B cell (primary cell): ENCODE measurements at regions of chr7 and their contacts with region 1.

Region 1: GRCh38 chr7:38215735-38216670 is 38.0 kb downstream of the STARD3NL start:
- DNase-seq: peak; percentile 81
- ATAC-seq: peak; percentile 95
- H3K4me3 ChIP-seq: no peak overlapping the region
- H3K4me3 Mint-ChIP-seq: no peak overlapping the region
- H3K27ac ChIP-seq: no peak overlapping the region
- H3K27ac Mint-ChIP-seq: peak overlapping the region; percentile 2
- H3K4me1 ChIP-seq: peaks cover 4 to 9% of the 10 kb centered on the region in 2 donors
- H3K4me1 Mint-ChIP-seq: peaks cover 7% of the 10 kb centered on the region
- H3K27me3 ChIP-seq: no peaks in the 10 kb centered on the region
- H3K27me3 Mint-ChIP-seq: no peaks in the 10 kb centered on the region
- CTCF ChIP-seq: peak; percentile 97

Region 2: GRCh38 chr7:36923943-36924436 is 1292.0 kb before region 1 on chr7:
- CTCF ChIA-PET with region 1: no interaction called
- POLR2A ChIA-PET with region 1: no interaction called
- intact Hi-C with region 1: no loop called
- DNase-seq: no peak
- ATAC-seq: no peak
- H3K4me3 ChIP-seq: no peak overlapping the region
- H3K4me3 Mint-ChIP-seq: no peak overlapping the region
- H3K27ac ChIP-seq: no peak overlapping the region
- H3K27ac Mint-ChIP-seq: no peak overlapping the region
- H3K4me1 ChIP-seq: no peaks in the 10 kb centered on the region
- H3K4me1 Mint-ChIP-seq: no peaks in the 10 kb centered on the region
- H3K27me3 ChIP-seq: no peaks in the 10 kb centered on the region
- H3K27me3 Mint-ChIP-seq: no peaks in the 10 kb centered on the region
- CTCF ChIP-seq: no peak

Region 3: DNA sequence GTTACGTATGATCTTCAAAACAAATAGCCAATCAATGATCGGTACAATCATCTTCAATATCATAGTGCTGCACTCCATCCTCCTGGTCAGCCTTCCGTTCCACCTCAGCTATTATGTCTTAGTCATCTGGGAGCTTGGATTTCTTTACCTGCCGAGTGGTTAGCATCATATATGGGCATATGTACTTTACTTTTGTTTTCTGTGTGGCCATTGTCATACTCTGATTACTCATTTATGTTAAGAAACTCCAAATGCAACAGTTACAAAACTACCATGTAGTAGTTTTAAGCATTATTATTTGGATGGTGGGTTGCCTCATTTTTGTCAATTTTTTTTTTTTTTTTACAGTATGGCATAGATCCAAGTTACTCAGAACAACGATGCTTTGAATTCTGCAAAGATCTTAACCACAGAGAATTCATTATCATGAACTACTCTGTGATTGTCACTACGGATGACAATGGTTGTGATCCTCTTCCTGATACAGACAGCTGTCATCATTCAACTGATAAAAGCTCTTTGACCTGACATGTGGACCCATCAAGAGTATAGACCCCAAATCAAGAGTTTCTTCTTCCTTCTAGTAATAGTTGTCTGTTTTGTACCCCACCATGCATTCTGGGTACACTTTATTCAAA is 419.7 kb before region 1 on chr7:
- CTCF ChIA-PET with region 1: no interaction called
- POLR2A ChIA-PET with region 1: no interaction called
- intact Hi-C with region 1: no loop called
- DNase-seq: no peak
- ATAC-seq: no peak
- H3K4me3 ChIP-seq: no peak overlapping the region
- H3K4me3 Mint-ChIP-seq: no peak overlapping the region
- H3K27ac ChIP-seq: no peak overlapping the region
- H3K27ac Mint-ChIP-seq: no peak overlapping the region
- H3K4me1 ChIP-seq: no peaks in the 10 kb centered on the region
- H3K4me1 Mint-ChIP-seq: no peaks in the 10 kb centered on the region
- H3K27me3 ChIP-seq: no peaks in the 10 kb centered on the region
- H3K27me3 Mint-ChIP-seq: no peaks in the 10 kb centered on the region
- CTCF ChIP-seq: no peak

Region 4: GRCh38 chr7:38107486-38107893 is 108.5 kb before region 1 on chr7:
- CTCF ChIA-PET with region 1: interaction called, 162 read pairs
- POLR2A ChIA-PET with region 1: no interaction called
- intact Hi-C with region 1: no loop called
- DNase-seq: peak; percentile 69
- ATAC-seq: peak; percentile 57
- H3K4me3 ChIP-seq: no peak overlapping the region
- H3K4me3 Mint-ChIP-seq: no peak overlapping the region
- H3K27ac ChIP-seq: no peak overlapping the region
- H3K27ac Mint-ChIP-seq: no peak overlapping the region
- H3K4me1 ChIP-seq: no peaks in the 10 kb centered on the region
- H3K4me1 Mint-ChIP-seq: no peaks in the 10 kb centered on the region
- H3K27me3 ChIP-seq: peaks cover 0 to 4% (median 2%) of the 10 kb centered on the region in 4 experiments
- H3K27me3 Mint-ChIP-seq: peaks cover 35% of the 10 kb centered on the region
- CTCF ChIP-seq: peak; percentile 94

Region 5: DNA sequence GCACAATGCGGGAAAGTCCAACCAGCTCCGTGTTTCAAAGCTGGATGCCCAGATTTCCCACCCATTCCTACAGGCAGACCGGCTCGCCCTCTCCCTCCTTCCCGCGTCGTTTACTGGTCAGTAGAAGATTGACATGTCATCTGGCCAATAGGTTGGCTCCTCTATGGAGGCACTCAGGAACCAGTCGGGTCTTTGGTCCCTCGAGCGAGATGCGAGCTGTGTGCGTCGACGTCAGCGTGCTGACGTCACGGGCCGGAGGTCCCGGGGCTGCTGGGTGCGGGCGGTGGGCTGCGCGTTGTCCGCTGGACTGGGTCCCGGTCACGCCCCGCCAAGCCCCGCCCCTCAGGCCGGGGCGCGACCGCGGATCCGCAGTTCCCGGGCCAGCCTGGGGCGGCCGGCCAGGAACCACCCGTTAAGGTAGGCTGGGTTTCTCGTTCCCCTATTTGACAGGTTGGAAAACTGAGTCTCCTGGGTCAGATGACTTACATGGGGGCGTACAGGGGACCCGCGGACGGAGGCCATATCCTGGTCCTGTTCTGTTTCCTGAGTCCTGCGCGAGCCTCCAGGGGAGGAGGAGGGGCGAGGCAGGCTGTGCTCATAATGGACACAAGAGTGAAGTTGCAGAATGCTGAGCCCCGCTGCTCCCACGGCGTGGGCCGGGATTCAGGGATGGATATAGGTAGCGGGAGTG is 37.9 kb before region 1 on chr7 and contains the start of gene STARD3NL:
- CTCF ChIA-PET with region 1: interaction called, 13 read pairs
- POLR2A ChIA-PET with region 1: no interaction called
- intact Hi-C with region 1: loop called (anchors 1 kb)
- DNase-seq: peak; percentile 98
- ATAC-seq: peak; percentile 95
- H3K4me3 ChIP-seq: peak within 1 kb of the TSS; percentile 36 to 98 (median 91)
- H3K4me3 Mint-ChIP-seq: peak within 1 kb of the TSS; percentile 97
- H3K27ac ChIP-seq: peak within 1 kb of the TSS; percentile 81 to 93
- H3K27ac Mint-ChIP-seq: peak within 1 kb of the TSS; percentile 95
- H3K4me1 ChIP-seq: peaks cover 16 to 17% of the 10 kb centered on the region in 2 donors
- H3K4me1 Mint-ChIP-seq: peaks cover 33% of the 10 kb centered on the region
- H3K27me3 ChIP-seq: no peaks in the 10 kb centered on the region
- H3K27me3 Mint-ChIP-seq: no peaks in the 10 kb centered on the region
- CTCF ChIP-seq: no peak
- total RNA-seq, gene STARD3NL: 13.4 and 14.2 TPM in 2 replicates

Region 6: DNA sequence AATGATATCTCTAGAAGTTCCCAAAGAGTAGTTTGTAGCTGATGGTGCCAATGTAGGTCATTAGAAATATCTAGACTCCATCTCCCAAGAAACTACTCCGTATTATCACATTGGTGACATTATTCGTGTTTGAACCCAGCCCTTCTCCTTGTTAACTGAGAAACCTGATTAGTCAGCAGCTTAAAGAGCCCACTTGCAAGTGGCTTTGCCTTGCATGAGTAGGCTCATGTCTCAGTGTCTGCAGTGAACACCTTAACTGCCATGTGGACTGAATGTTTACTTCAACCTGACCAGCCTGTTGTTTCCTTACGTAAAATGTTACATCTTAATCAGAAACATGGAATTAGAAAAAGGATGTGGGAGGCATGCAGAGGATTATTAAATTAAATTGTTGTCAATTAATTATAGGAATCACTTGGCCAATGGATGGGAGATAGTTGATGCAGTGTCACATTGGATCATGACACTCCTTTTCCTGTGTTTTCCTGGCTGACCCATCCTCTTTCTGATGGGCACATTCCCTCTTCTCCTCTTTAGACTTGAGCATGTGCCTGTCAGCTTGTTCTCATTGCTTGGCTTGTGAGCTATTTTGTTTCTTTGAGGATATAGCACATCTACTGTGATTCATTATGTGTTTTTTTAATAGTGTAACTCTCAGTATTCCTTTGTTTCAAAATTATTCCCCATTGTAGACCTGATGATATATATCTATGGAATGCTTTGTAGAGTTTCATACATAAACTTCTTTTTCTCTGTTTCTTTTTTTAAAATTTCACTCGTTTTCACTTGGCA is 20.0 kb before region 1 on chr7:
- CTCF ChIA-PET with region 1: interaction called, 16 read pairs
- POLR2A ChIA-PET with region 1: no interaction called
- intact Hi-C with region 1: no loop called
- DNase-seq: no peak
- ATAC-seq: no peak
- H3K4me3 ChIP-seq: no peak overlapping the region
- H3K4me3 Mint-ChIP-seq: no peak overlapping the region
- H3K27ac ChIP-seq: no peak overlapping the region
- H3K27ac Mint-ChIP-seq: no peak overlapping the region
- H3K4me1 ChIP-seq: no peaks in the 10 kb centered on the region
- H3K4me1 Mint-ChIP-seq: peaks cover 27% of the 10 kb centered on the region
- H3K27me3 ChIP-seq: no peaks in the 10 kb centered on the region
- H3K27me3 Mint-ChIP-seq: no peaks in the 10 kb centered on the region
- CTCF ChIP-seq: no peak

Region 7: GRCh38 chr7:38335492-38336147 is 119.6 kb after region 1 on chr7:
- CTCF ChIA-PET with region 1: interaction called, 37 read pairs
- POLR2A ChIA-PET with region 1: no interaction called
- intact Hi-C with region 1: no loop called
- DNase-seq: peak; percentile 86
- ATAC-seq: peak; percentile 98
- H3K4me3 ChIP-seq: no peak overlapping the region
- H3K4me3 Mint-ChIP-seq: peak overlapping the region; percentile 11
- H3K27ac ChIP-seq: no peak overlapping the region
- H3K27ac Mint-ChIP-seq: peak overlapping the region; percentile 13
- H3K4me1 ChIP-seq: peaks cover 5 to 16% of the 10 kb centered on the region in 2 donors
- H3K4me1 Mint-ChIP-seq: peaks cover 15% of the 10 kb centered on the region
- H3K27me3 ChIP-seq: no peaks in the 10 kb centered on the region
- H3K27me3 Mint-ChIP-seq: no peaks in the 10 kb centered on the region
- CTCF ChIP-seq: peak; percentile 96

Region 8: GRCh38 chr7:38369816-38370493 is 154.0 kb after region 1 on chr7:
- CTCF ChIA-PET with region 1: interaction called, 49 read pairs
- POLR2A ChIA-PET with region 1: no interaction called
- intact Hi-C with region 1: loop called (anchors 1 kb)
- DNase-seq: peak; percentile 87
- ATAC-seq: peak; percentile 80
- H3K4me3 ChIP-seq: no peak overlapping the region
- H3K4me3 Mint-ChIP-seq: peak overlapping the region; percentile 2
- H3K27ac ChIP-seq: peak overlapping the region in 1 of 2 donors; percentile 32
- H3K27ac Mint-ChIP-seq: no peak overlapping the region
- H3K4me1 ChIP-seq: peaks cover 10 to 25% of the 10 kb centered on the region in 2 donors
- H3K4me1 Mint-ChIP-seq: peaks cover 18% of the 10 kb centered on the region
- H3K27me3 ChIP-seq: no peaks in the 10 kb centered on the region
- H3K27me3 Mint-ChIP-seq: no peaks in the 10 kb centered on the region
- CTCF ChIP-seq: peak; percentile 74

Region 9: GRCh38 chr7:38375453-38375852 is 159.4 kb after region 1 on chr7:
- CTCF ChIA-PET with region 1: interaction called, 49 read pairs
- POLR2A ChIA-PET with region 1: no interaction called
- intact Hi-C with region 1: loop called (anchors 1 kb)
- DNase-seq: no peak
- ATAC-seq: no peak
- H3K4me3 ChIP-seq: no peak overlapping the region
- H3K4me3 Mint-ChIP-seq: no peak overlapping the region
- H3K27ac ChIP-seq: no peak overlapping the region
- H3K27ac Mint-ChIP-seq: no peak overlapping the region
- H3K4me1 ChIP-seq: no peaks in the 10 kb centered on the region
- H3K4me1 Mint-ChIP-seq: no peaks in the 10 kb centered on the region
- H3K27me3 ChIP-seq: no peaks in the 10 kb centered on the region
- H3K27me3 Mint-ChIP-seq: no peaks in the 10 kb centered on the region
- CTCF ChIP-seq: no peak